GM12878 (cell line): ENCODE measurements at regions of chr7 and their contacts with region 1.

Region 1: GRCh38 chr7:77561352-77561751 is 24.3 kb downstream of the PTPN12 start:
- DNase-seq: peak; percentile 51
- ATAC-seq: peak; percentile 89
- H3K4me3 ChIP-seq: no peak overlapping the region
- H3K27ac ChIP-seq: 0 out of 2 replicates have a peak overlapping the region, but pooled peaks have one; percentile 4
- H3K4me1 ChIP-seq: peaks cover 13% of the 10 kb centered on the region
- H3K27me3 ChIP-seq: no peaks in the 10 kb centered on the region
- CTCF ChIP-seq: no peak
- EP300 ChIP-seq: peak; percentile 44 to 82; a peak in 3 of 4 replicates
- POLR2A ChIP-seq: no peak
- RAD21 ChIP-seq: no peak

Region 2: DNA sequence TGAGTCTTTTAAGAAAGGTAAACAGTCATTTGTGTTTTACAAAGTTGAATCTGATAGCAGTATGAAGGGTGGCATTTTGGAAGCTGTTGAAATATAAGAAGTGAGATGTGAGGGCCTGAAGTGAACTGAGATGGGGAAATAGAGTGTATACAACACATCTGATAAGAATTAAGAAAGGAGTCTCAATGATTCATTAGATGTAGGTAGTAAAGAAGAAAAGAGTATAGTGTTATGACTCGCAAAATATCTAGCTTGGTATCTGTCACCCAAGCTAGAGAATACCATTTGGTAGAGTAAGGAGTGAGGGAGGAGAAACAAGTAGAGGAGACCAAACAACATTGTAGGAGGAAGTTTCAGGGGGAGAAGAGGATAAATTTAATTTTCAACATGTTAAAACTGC is 18.9 kb before region 1 on chr7:
- CTCF ChIA-PET with region 1: interaction called, 13 read pairs
- POLR2A ChIA-PET with region 1: interaction called, 57 read pairs
- RAD21 ChIA-PET with region 1: interaction called, 12 read pairs
- SMC1A ChIA-PET with region 1: interaction called, 66 read pairs
- in situ Hi-C with region 1: no loop called
- intact Hi-C with region 1: no loop called
- DNase-seq: no peak
- ATAC-seq: peak; percentile 2; the same call in 1 of the 3 replicates
- H3K4me3 ChIP-seq: no peak overlapping the region
- H3K27ac ChIP-seq: no peak overlapping the region
- H3K4me1 ChIP-seq: peaks cover 12% of the 10 kb centered on the region
- H3K27me3 ChIP-seq: no peaks in the 10 kb centered on the region
- CTCF ChIP-seq: no peak
- EP300 ChIP-seq: no peak
- POLR2A ChIP-seq: no peak
- RAD21 ChIP-seq: no peak

Region 3: DNA sequence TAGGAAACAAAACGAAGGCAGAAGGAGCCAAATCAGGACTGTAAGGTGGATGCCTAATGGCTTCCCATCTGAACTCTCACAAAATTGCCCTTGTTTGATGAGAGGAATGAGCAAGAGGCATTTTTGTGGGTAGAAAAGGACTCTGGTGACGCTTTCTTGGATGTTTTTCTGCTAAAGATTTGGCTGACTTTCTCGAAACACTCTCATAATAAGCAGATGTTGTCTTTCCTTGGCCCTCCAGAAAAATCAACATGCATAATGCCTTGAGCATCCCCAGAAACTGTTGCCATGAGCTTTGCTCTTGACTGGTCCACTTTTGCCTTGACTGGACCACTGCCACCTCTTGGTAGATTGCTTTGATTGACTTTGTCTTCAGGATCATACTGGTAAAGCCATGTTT is 10.8 kb before region 1 on chr7:
- CTCF ChIA-PET with region 1: interaction called, 13 read pairs
- POLR2A ChIA-PET with region 1: interaction called, 57 read pairs
- RAD21 ChIA-PET with region 1: interaction called, 7 read pairs
- SMC1A ChIA-PET with region 1: interaction called, 66 read pairs
- in situ Hi-C with region 1: no loop called
- intact Hi-C with region 1: no loop called
- DNase-seq: no peak
- ATAC-seq: no peak
- H3K4me3 ChIP-seq: no peak overlapping the region
- H3K27ac ChIP-seq: no peak overlapping the region
- H3K4me1 ChIP-seq: no peaks in the 10 kb centered on the region; the same call in 1 of the 2 replicates
- H3K27me3 ChIP-seq: no peaks in the 10 kb centered on the region
- CTCF ChIP-seq: no peak
- EP300 ChIP-seq: no peak
- POLR2A ChIP-seq: no peak
- RAD21 ChIP-seq: no peak

Region 4: DNA sequence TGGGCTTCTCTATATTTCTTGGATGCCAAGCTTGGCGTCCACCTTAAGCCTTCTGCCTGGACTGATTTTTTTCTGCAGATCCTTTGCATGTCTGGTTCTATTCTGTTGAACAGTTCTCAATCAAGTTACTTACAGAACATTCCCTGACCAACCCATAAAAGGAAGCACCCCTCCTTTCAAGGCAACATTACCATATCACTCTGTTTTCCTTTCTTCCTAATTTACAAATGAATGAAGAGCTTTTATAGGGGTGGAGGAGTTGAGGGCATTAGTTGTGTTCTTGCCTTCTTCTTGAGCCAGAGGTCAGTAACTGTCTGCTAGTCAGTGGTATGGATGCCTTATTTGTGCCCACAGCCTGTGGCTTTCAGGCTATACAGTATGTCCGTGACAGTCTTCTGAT is 598.2 kb after region 1 on chr7:
- CTCF ChIA-PET with region 1: no interaction called
- POLR2A ChIA-PET with region 1: no interaction called
- RAD21 ChIA-PET with region 1: no interaction called
- SMC1A ChIA-PET with region 1: no interaction called
- in situ Hi-C with region 1: no loop called
- intact Hi-C with region 1: no loop called
- DNase-seq: no peak
- ATAC-seq: no peak
- H3K4me3 ChIP-seq: no peak overlapping the region
- H3K27ac ChIP-seq: no peak overlapping the region
- H3K4me1 ChIP-seq: no peaks in the 10 kb centered on the region
- H3K27me3 ChIP-seq: peaks cover 0 to 2% of the 10 kb centered on the region in 2 experiments; a peak in 2 of 4 replicates
- CTCF ChIP-seq: no peak
- EP300 ChIP-seq: no peak
- POLR2A ChIP-seq: no peak
- RAD21 ChIP-seq: no peak